GM12878 (cell line): ENCODE measurements at regions of chr15 and their contacts with region 1.

Region 1: GRCh38 chr15:39580117-39580484 is 778 bp upstream of the THBS1 start:
- DNase-seq: no peak
- ATAC-seq: peak; percentile 94
- H3K4me3 ChIP-seq: peak overlapping the region; percentile 58; the same call in 1 of the 2 replicates
- H3K27ac ChIP-seq: no peak overlapping the region
- H3K4me1 ChIP-seq: no peaks in the 10 kb centered on the region
- H3K27me3 ChIP-seq: peaks cover 4 to 5% of the 10 kb centered on the region in 2 experiments; a peak in 3 of 4 replicates
- CTCF ChIP-seq: peak; percentile 90 to 98 (median 91)
- EP300 ChIP-seq: no peak
- POLR2A ChIP-seq: no peak
- RAD21 ChIP-seq: peak; percentile 94

Region 2: GRCh38 chr15:38714309-38715072 is 865.6 kb before region 1 on chr15:
- CTCF ChIA-PET with region 1: no interaction called
- POLR2A ChIA-PET with region 1: no interaction called
- RAD21 ChIA-PET with region 1: no interaction called
- SMC1A ChIA-PET with region 1: no interaction called
- in situ Hi-C with region 1: loop called (anchors 5 kb)
- intact Hi-C with region 1: loop called (anchors 5 kb)
- DNase-seq: no peak
- ATAC-seq: no peak
- H3K4me3 ChIP-seq: no peak overlapping the region
- H3K27ac ChIP-seq: no peak overlapping the region
- H3K4me1 ChIP-seq: no peaks in the 10 kb centered on the region
- H3K27me3 ChIP-seq: no peaks in the 10 kb centered on the region; a peak in 1 of 4 replicates
- CTCF ChIP-seq: no peak
- EP300 ChIP-seq: no peak
- POLR2A ChIP-seq: no peak
- RAD21 ChIP-seq: no peak

Region 3: DNA sequence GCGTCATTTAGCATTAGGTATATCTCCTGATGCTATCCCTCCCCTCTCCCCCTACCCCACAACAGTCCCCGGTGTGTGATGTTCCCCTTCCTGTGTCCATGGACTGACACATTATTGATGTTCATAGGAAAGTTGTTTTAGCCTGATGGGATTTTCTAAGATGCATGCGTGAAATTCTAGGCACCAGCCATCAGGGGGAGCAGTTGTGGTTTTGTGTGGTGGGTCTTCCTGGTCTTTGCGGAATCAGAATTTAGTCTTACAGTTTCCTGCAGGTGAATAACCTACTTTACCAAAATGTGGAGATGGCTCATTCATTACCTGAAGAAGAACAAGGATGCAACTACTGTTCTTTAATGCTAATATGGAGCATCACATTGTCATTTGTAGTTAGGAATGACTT is 454.2 kb before region 1 on chr15:
- CTCF ChIA-PET with region 1: interaction called, 13 read pairs
- POLR2A ChIA-PET with region 1: no interaction called
- RAD21 ChIA-PET with region 1: interaction called, 10 read pairs
- SMC1A ChIA-PET with region 1: interaction called, 5 read pairs
- in situ Hi-C with region 1: loop called (anchors 5 kb)
- intact Hi-C with region 1: loop called (anchors 1 kb)
- DNase-seq: no peak
- ATAC-seq: peak; percentile 63
- H3K4me3 ChIP-seq: no peak overlapping the region
- H3K27ac ChIP-seq: no peak overlapping the region
- H3K4me1 ChIP-seq: no peaks in the 10 kb centered on the region
- H3K27me3 ChIP-seq: no peaks in the 10 kb centered on the region
- CTCF ChIP-seq: peak; percentile 64 to 73 (median 66)
- EP300 ChIP-seq: no peak
- POLR2A ChIP-seq: no peak
- RAD21 ChIP-seq: peak; percentile 70

Region 4: DNA sequence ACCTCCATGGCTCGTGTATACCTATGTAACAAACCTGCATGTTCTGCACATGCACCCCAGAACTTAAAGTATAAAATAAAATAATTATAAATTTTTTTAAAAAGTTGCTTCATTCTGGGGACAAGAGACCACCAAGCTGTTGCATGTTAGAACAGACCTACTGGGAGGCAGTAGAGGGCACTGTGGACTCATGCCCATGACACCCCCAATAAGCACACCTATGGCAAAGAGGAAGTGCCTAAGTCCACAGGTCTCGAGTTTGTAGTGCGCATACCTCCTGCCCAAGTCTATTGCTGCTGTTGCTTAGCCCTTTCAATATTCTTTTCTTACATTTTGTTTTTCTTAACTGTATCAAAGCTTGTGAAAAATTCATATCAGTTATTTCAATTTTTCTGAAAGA is 267.1 kb before region 1 on chr15:
- CTCF ChIA-PET with region 1: interaction called, 8 read pairs
- POLR2A ChIA-PET with region 1: no interaction called
- RAD21 ChIA-PET with region 1: no interaction called
- SMC1A ChIA-PET with region 1: interaction called, 3 read pairs
- in situ Hi-C with region 1: no loop called
- intact Hi-C with region 1: loop called (anchors 2 kb)
- DNase-seq: no peak
- ATAC-seq: peak; percentile 88
- H3K4me3 ChIP-seq: no peak overlapping the region
- H3K27ac ChIP-seq: no peak overlapping the region
- H3K4me1 ChIP-seq: no peaks in the 10 kb centered on the region
- H3K27me3 ChIP-seq: no peaks in the 10 kb centered on the region
- CTCF ChIP-seq: peak; percentile 13 to 27 (median 27); a peak in 3 of 6 replicates
- EP300 ChIP-seq: no peak
- POLR2A ChIP-seq: no peak
- RAD21 ChIP-seq: peak; percentile 47